ENCODE measurements at regions of chr3 and their contacts with region 1.

Region 1: GRCh38 chr3:78919021-78919755 is 848.6 kb downstream of the ROBO1 start:
- DNase-seq: no peak
- H3K4me3 ChIP-seq: no peak overlapping the region
- H3K27ac ChIP-seq: no peak overlapping the region
- H3K4me1 ChIP-seq: peaks cover 0 to 7% (median 2%) of the 10 kb centered on the region in 4 donors
- H3K27me3 ChIP-seq: no peaks in the 10 kb centered on the region
- CTCF ChIP-seq: no peak
- EP300 ChIP-seq: no peak
- POLR2A ChIP-seq: no peak

Region 2: DNA sequence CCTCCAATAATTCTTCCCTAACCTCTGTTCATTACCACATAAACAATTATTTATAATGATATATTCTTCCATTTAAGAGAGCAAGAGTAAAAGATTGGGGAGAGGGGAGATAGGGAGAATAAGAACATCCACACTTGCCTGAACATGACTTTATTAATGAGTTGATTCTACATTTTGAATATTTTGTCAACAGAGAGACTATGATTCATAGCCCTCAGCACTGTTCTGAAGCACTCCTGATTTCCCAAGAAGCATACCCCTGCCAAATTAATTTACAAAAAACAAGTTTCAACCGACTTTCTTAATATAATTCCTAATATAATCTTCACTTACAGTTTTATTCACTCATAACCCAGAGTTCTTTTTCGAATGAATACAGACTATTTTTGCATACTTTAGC is 1050.5 kb before region 1 on chr3:
- in situ Hi-C with region 1: no loop called
- intact Hi-C with region 1: loop called (anchors 10 kb)
- DNase-seq: no peak
- H3K4me3 ChIP-seq: no peak overlapping the region
- H3K27ac ChIP-seq: no peak overlapping the region
- H3K4me1 ChIP-seq: no peaks in the 10 kb centered on the region
- H3K27me3 ChIP-seq: no peaks in the 10 kb centered on the region
- CTCF ChIP-seq: no peak
- EP300 ChIP-seq: no peak
- POLR2A ChIP-seq: no peak

Region 3: DNA sequence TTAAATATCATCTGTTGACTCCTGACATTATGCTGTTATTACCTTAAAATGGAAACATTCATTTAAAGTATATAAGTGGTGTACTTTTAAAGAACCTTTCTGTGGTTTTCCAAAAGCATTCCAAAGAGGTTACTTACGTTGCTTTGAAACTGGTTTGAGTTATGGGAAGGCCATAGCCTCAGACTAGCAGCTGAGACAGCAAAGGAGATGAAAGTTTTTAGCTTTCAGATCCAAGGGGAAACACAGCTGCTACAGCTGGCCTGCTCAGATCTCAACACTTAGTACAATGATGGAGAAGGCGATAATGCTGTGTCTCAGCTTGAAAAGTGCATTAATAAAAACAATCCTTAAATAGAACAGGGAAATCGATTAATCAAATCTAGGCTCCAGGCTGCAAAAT is 72.5 kb before region 1 on chr3:
- in situ Hi-C with region 1: no loop called
- intact Hi-C with region 1: no loop called
- DNase-seq: no peak
- H3K4me3 ChIP-seq: no peak overlapping the region
- H3K27ac ChIP-seq: no peak overlapping the region
- H3K4me1 ChIP-seq: no peaks in the 10 kb centered on the region
- H3K27me3 ChIP-seq: no peaks in the 10 kb centered on the region
- CTCF ChIP-seq: no peak
- EP300 ChIP-seq: no peak
- POLR2A ChIP-seq: no peak

Region 4: DNA sequence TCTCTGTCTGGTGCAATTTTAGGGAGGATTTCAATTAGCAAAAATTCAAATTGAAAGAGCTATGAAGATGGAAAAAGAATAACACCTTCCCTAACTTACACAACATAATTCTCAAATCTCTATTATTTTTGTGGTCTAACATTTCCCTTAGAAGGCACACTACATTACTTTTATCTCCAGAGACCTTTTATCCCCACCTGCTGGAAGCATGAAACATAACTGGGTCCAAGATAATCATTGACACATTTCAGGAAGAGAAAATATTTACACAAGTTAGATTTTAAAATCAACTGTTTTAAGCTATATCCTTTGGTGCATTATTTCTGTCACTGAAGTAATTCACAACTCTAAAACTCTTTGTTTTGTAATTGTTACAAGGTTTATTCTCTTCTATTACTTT is 69.1 kb after region 1 on chr3:
- in situ Hi-C with region 1: no loop called
- intact Hi-C with region 1: no loop called
- DNase-seq: no peak
- H3K4me3 ChIP-seq: no peak overlapping the region
- H3K27ac ChIP-seq: no peak overlapping the region
- H3K4me1 ChIP-seq: peaks cover 0 to 14% (median 2%) of the 10 kb centered on the region in 4 donors
- H3K27me3 ChIP-seq: no peaks in the 10 kb centered on the region
- CTCF ChIP-seq: peak in 4 of 5 experiments; percentile 23 to 30 (median 26)
- EP300 ChIP-seq: no peak
- POLR2A ChIP-seq: no peak